ENCODE measurements at regions of chr5 and their contacts with region 1.

Region 1: DNA sequence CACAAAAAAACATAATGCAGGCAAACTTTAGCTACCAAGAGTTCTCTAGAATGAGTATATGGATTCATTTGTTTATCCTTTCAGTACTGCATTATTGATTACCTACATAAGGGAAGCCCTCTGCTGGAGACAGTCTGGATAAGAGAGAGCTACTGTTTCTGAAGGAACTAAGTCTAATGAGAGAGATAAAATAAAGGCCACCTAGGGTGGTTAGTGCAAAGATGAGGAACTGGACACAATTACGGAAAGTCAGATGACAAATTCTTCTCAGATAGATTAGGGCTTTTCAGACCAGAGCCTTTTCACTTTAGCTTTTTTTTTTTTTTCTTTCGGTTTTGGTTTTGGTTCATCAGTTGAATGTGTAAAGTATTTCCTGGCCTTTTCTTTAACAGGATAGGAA is 31.3 kb downstream of the ISOC1 start:
- DNase-seq: peak in 3 of 14 experiments; percentile 14 to 41 (median 22)
- ATAC-seq: peak; percentile 17
- H3K4me3 ChIP-seq: peak overlapping the region; percentile 17
- H3K4me3 Mint-ChIP-seq: peak overlapping the region; percentile 36
- H3K27ac ChIP-seq: peak overlapping the region in 1 of 2 donors; percentile 12
- H3K27ac Mint-ChIP-seq: peak overlapping the region; percentile 82
- H3K4me1 ChIP-seq: peaks cover 5% of the 10 kb centered on the region
- H3K4me1 Mint-ChIP-seq: peaks cover 12% of the 10 kb centered on the region
- H3K27me3 ChIP-seq: no peaks in the 10 kb centered on the region
- H3K27me3 Mint-ChIP-seq: no peaks in the 10 kb centered on the region
- CTCF ChIP-seq: no peak

Region 2: DNA sequence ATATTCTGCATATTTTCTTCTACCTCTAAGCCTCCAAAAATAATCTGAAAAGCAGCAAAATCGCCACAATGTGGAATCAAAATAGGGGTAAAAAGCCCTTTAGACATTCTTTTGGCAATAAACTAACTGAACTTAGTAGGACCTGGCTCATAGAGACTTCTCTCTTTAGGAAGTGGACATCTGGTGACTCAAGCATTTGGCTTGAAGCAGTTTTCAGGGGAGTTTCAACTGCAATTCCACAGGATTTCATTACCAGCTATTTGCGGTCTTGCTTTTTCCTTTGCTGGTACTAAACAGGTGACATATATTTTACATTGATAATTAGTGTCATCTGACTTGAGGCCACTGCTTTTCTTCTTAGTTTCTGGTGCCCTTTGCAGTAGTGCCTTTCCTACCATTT is 414.6 kb before region 1 on chr5:
- CTCF ChIA-PET with region 1: no interaction called
- POLR2A ChIA-PET with region 1: no interaction called
- intact Hi-C with region 1: no loop called
- DNase-seq: no peak
- ATAC-seq: no peak
- H3K4me3 ChIP-seq: no peak overlapping the region
- H3K4me3 Mint-ChIP-seq: no peak overlapping the region
- H3K27ac ChIP-seq: no peak overlapping the region
- H3K27ac Mint-ChIP-seq: no peak overlapping the region
- H3K4me1 ChIP-seq: no peaks in the 10 kb centered on the region
- H3K4me1 Mint-ChIP-seq: no peaks in the 10 kb centered on the region
- H3K27me3 ChIP-seq: no peaks in the 10 kb centered on the region
- H3K27me3 Mint-ChIP-seq: no peaks in the 10 kb centered on the region
- CTCF ChIP-seq: no peak

Region 3: DNA sequence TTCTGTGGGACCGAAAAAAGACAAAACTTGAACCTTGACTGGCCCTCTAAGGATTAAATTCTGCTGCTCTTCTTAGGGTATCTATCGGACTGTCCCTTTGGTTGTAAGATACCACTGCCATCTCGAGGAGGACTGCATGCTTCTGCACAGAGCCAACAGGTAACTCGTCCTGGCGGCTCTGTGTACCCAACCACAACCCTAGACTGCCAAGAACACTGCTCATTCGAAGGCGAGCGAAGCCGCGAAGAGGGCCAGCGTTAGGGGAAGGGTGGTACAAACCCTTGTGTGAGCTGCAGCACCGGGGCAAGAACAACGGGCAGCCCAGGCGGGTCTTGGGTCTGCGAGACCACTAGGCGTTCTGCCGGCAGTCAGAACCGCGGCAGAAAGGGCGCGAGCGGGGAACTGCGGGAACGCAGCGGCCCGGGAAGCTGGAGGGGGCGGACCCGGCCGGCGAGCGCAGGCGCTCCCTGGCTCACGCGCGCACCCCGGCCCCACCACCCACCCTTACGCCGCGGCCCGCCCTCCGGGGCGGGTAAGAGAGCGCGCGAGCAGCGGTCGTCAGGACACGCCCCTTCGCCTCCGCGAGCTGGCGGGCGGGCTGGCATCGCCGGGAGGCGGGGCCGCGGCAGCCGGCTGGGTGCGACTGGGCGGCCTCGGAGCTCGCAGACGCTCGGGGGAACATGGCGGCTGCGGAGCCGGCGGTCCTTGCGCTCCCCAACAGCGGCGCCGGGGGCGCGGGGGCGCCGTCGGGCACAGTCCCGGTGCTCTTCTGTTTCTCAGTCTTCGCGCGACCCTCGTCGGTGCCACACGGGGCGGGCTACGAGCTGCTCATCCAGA is 31.5 kb before region 1 on chr5 and contains the start of gene ISOC1:
- CTCF ChIA-PET with region 1: interaction called, 4 read pairs
- POLR2A ChIA-PET with region 1: interaction called, 14 read pairs
- intact Hi-C with region 1: no loop called
- DNase-seq: peak; percentile 80 to 97 (median 90)
- ATAC-seq: peak; percentile 90
- H3K4me3 ChIP-seq: peak within 1 kb of the TSS; percentile 75
- H3K4me3 Mint-ChIP-seq: peak within 1 kb of the TSS; percentile 93
- H3K27ac ChIP-seq: peak within 1 kb of the TSS; percentile 42 to 66
- H3K27ac Mint-ChIP-seq: peak within 1 kb of the TSS; percentile 88
- H3K4me1 ChIP-seq: peaks cover 15% of the 10 kb centered on the region
- H3K4me1 Mint-ChIP-seq: peaks cover 46% of the 10 kb centered on the region
- H3K27me3 ChIP-seq: no peaks in the 10 kb centered on the region
- H3K27me3 Mint-ChIP-seq: peaks cover 6% of the 10 kb centered on the region
- CTCF ChIP-seq: no peak
- total RNA-seq, gene ISOC1: 6.6 to 7.1 TPM

Measured in CD4-positive, alpha-beta T cell (primary cell).